ENCODE measurements at regions of chr12 and their contacts with region 1.

Region 1: GRCh38 chr12:80195074-80195726 is 95.9 kb downstream of the OTOGL start:
- DNase-seq: no peak
- H3K4me3 ChIP-seq: no peak overlapping the region
- CTCF ChIP-seq: no peak
- POLR2A ChIP-seq: no peak

Region 2: DNA sequence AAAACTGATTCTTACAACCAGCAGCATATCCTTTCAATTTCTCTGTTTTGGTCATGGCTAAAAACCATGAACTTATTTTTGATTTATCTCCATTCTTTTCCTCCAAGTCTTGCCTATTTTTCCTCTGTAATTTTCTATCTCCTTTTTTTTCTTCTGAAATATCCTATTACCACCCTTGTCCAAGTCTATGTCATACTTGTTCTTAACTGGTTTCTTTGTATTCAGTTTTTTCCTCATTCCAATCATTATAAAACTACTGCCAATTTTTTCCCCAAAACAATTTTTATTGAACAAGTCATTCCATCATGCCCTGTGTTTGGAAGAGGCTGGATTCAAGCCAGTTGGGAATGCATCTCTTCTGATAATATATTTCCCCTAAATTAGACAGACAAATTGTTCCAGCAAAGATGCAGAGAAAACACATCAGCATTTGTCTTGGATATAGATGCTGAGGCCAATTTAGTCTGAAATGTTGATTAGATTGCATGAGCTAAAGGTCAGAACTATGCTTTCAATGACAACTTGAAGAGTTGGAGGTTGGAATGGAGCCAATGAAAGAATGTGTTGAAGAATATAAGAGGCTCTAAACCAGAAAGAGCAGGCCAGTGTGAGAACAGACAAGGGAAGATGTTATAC is 65.2 kb before region 1 on chr12:
- intact Hi-C with region 1: no loop called
- DNase-seq: no peak
- H3K4me3 ChIP-seq: no peak overlapping the region
- CTCF ChIP-seq: no peak
- POLR2A ChIP-seq: no peak

Region 3: DNA sequence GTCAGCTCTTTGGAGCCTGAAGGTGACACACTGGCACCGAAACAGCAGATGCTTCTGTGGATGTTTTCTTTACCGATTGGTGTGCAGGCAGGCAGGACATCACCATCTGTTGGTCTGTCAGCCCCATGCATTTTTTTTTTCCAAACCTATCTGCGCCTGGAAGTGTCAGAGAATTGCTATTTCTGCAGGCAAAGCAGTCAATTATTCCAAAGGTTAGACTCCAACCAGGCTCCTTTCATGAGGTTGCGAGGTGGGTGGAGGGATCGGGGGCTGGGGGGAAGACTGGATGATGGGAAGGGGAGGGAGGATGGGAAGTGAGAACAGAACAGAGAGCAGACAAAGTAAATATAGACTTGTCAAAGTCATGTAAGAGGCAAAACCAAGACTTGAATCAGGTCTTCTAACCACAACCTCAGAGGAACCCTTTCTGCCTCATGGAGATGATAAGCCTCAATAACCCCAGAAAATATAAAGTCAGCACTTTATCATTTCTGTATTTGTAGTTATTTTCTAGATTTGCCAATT is 21.9 kb after region 1 on chr12:
- intact Hi-C with region 1: loop called (anchors 1 kb)
- DNase-seq: no peak
- H3K4me3 ChIP-seq: no peak overlapping the region
- CTCF ChIP-seq: no peak
- POLR2A ChIP-seq: no peak